A549 (cell line): ENCODE measurements at regions of chr2 and their contacts with region 1.

Region 1: GRCh38 chr2:231297108-231297908 is 98.2 kb upstream of the B3GNT7 start:
- DNase-seq: peak; percentile 71 to 84
- ATAC-seq: peak; percentile 92
- H3K4me3 ChIP-seq: no peak overlapping the region
- H3K27ac ChIP-seq: no peak overlapping the region
- H3K4me1 ChIP-seq: peaks cover 25% of the 10 kb centered on the region
- CTCF ChIP-seq: peak; percentile 79
- EP300 ChIP-seq: no peak
- POLR2A ChIP-seq: no peak
- RAD21 ChIP-seq: peak; percentile 77 to 78

Region 2: GRCh38 chr2:231270221-231271114 is 26.8 kb before region 1 on chr2:
- CTCF ChIA-PET with region 1: interaction called, 10 read pairs
- POLR2A ChIA-PET with region 1: no interaction called
- DNase-seq: no peak
- ATAC-seq: no peak
- H3K4me3 ChIP-seq: no peak overlapping the region
- H3K27ac ChIP-seq: no peak overlapping the region
- H3K4me1 ChIP-seq: no peaks in the 10 kb centered on the region
- CTCF ChIP-seq: no peak
- EP300 ChIP-seq: no peak
- POLR2A ChIP-seq: no peak
- RAD21 ChIP-seq: no peak

Region 3: DNA sequence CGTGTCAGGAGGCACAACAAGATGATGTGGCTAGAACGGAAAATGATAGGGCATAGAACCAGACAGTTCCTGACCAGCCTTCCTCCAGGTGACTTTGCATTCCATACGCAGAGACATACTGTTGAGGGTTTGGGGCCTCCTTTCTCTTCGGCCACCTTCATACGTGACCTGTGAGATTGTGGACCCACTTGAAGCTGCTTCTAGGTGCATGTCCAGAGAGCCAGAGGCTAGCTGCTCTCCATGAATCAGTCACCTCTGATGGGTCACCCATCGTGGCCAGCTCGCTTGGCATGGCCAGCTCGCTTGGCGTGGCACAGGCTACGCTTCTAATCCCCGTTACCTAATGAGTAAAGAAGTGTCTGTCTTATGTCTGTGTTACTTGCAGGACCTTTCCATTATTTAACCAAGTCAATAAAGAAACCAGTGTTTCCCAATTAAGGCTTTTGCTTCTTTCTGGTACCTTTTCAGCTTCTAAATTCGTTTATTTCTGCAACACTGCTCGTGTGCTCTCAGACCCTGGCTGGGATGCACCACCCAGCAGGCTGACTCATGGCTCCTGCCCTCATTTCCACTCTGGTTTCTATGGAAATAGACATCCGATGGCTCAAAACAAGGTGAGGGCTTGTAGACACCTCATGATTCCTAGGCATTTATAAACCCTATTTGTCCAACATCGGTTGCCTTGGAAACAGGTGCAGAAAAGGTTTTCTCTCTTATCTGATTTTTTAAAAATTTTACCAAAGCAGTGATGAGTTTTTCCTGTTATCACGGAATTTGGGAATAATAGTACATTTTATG is 11.5 kb after region 1 on chr2:
- CTCF ChIA-PET with region 1: interaction called, 56 read pairs
- POLR2A ChIA-PET with region 1: no interaction called
- DNase-seq: peak; percentile 43 to 80
- ATAC-seq: peak; percentile 85 to 87
- H3K4me3 ChIP-seq: no peak overlapping the region
- H3K27ac ChIP-seq: peak overlapping the region; percentile 7 to 12; a peak in 1 of 6 replicates
- H3K4me1 ChIP-seq: peaks cover 14% of the 10 kb centered on the region; the same call in 2 of the 3 replicates
- CTCF ChIP-seq: no peak
- EP300 ChIP-seq: no peak
- POLR2A ChIP-seq: no peak
- RAD21 ChIP-seq: no peak

Region 4: DNA sequence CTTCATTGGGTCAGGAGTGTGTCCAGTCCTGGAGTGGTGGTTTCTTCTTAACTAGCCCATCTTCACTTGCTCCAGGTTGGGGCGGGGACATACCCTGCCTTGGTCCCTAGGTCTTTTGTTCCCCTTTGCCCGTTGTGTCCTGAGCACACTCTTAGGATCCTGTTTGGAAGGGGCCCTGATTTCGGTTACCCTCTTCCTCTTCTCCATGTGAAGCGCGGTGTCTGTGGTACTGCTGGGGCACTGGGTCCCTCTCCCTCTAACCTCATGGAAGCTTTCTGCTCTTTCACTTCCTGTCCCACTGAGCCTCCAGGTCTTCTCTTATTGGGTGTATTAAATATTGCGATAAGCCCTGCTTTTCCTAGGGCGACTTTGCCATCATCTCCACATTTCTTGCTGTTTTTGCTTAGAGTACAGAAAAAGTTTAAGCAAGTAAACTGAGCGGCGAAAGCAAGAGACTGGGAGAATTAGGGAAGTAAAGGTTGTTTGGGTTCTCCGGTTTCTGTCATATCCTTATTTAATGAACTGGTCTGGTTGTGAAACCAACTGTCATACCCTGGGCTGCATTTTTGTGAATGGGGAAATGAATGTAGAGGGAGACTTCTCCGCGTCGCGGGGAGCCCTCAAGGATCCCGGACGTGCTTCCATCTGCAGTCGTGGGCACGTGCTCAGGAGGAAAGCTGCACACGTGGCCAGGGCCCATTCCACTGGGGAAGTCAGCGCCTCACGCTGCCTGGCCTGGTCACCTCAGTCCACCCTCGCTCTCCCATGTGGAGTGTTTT is 24.4 kb after region 1 on chr2:
- CTCF ChIA-PET with region 1: interaction called, 16 read pairs
- POLR2A ChIA-PET with region 1: no interaction called
- DNase-seq: no peak
- ATAC-seq: no peak
- H3K4me3 ChIP-seq: no peak overlapping the region
- H3K27ac ChIP-seq: no peak overlapping the region
- H3K4me1 ChIP-seq: no peaks in the 10 kb centered on the region
- CTCF ChIP-seq: no peak
- EP300 ChIP-seq: no peak
- POLR2A ChIP-seq: no peak
- RAD21 ChIP-seq: no peak

Region 5: GRCh38 chr2:231394211-231395141 is 97.2 kb after region 1 on chr2:
- CTCF ChIA-PET with region 1: interaction called, 294 read pairs
- POLR2A ChIA-PET with region 1: no interaction called
- DNase-seq: peak in 1 of 2 experiments; percentile 34
- ATAC-seq: peak in 1 of 2 experiments; percentile 42; a peak in 3 of 6 replicates
- H3K4me3 ChIP-seq: peak overlapping the region; percentile 73; the same call in 2 of the 3 replicates
- H3K27ac ChIP-seq: peak overlapping the region; percentile 83 to 86; a peak in 4 of 6 replicates
- H3K4me1 ChIP-seq: peaks cover 6% of the 10 kb centered on the region
- CTCF ChIP-seq: 0 out of 3 replicates have a peak, but pooled peaks have one; percentile 21
- EP300 ChIP-seq: no peak
- POLR2A ChIP-seq: no peak
- RAD21 ChIP-seq: no peak

Region 6: GRCh38 chr2:231418820-231419640 is 121.7 kb after region 1 on chr2:
- CTCF ChIA-PET with region 1: interaction called, 294 read pairs
- POLR2A ChIA-PET with region 1: no interaction called
- DNase-seq: no peak
- ATAC-seq: 0 out of 6 replicates have a peak, but pooled peaks of 1 of the 2 experiments have one; percentile 16
- H3K4me3 ChIP-seq: no peak overlapping the region
- H3K27ac ChIP-seq: no peak overlapping the region
- H3K4me1 ChIP-seq: no peaks in the 10 kb centered on the region
- CTCF ChIP-seq: no peak
- EP300 ChIP-seq: no peak
- POLR2A ChIP-seq: no peak
- RAD21 ChIP-seq: no peak